T-cell (primary cell): ENCODE measurements at regions of chr2 and their contacts with region 1.

Region 1: GRCh38 chr2:191051825-191052778 is 38.1 kb upstream of the STAT1 start:
- DNase-seq: peak in 6 of 35 experiments; percentile 5 to 77 (median 23)
- ATAC-seq: peak; percentile 58 to 74 (median 68)
- H3K4me3 ChIP-seq: no peak overlapping the region
- H3K4me3 Mint-ChIP-seq: no peak overlapping the region
- H3K27ac ChIP-seq: peak overlapping the region; percentile 14
- H3K27ac Mint-ChIP-seq: no peak overlapping the region
- H3K4me1 ChIP-seq: peaks cover 8 to 15% of the 10 kb centered on the region in 2 experiments
- H3K4me1 Mint-ChIP-seq: peaks cover 23 to 26% (median 24%) of the 10 kb centered on the region in 3 donors
- H3K27me3 ChIP-seq: no peaks in the 10 kb centered on the region
- H3K27me3 Mint-ChIP-seq: no peaks in the 10 kb centered on the region

Region 2: DNA sequence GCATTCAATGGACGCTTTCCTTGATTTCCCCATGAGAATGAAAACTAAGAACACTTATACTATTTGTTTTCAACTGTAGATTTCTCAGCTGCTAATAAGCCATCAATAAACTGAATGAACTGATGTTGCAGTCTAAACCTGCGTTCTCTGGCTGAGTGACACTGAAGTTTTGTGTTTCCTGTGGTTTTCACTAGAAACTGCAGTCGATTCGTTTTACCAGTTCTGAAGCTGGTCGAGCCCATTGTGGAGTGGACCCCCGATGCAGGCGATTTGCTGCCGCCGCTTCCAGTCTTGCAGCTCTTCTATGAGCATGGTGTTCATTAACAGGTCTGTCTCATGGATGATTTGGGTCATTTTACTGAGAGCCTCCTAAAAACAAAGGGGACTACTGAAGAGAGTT is 12.5 kb after region 1 on chr2:
- CTCF ChIA-PET with region 1: interaction called, 21 to 63 read pairs
- POLR2A ChIA-PET with region 1: interaction called, 3 to 4 read pairs
- DNase-seq: peak in 20 of 35 experiments; percentile 1 to 54 (median 14)
- ATAC-seq: peak in 3 of 4 experiments; percentile 45 to 61 (median 56)
- H3K4me3 ChIP-seq: peak overlapping the region; percentile 10 to 23
- H3K4me3 Mint-ChIP-seq: peak overlapping the region; percentile 73 to 87 (median 80)
- H3K27ac ChIP-seq: peak overlapping the region; percentile 55
- H3K27ac Mint-ChIP-seq: peak overlapping the region; percentile 98
- H3K4me1 ChIP-seq: peaks cover 34 to 55% of the 10 kb centered on the region in 2 experiments
- H3K4me1 Mint-ChIP-seq: peaks cover 76 to 85% (median 82%) of the 10 kb centered on the region in 3 donors
- H3K27me3 ChIP-seq: no peaks in the 10 kb centered on the region
- H3K27me3 Mint-ChIP-seq: no peaks in the 10 kb centered on the region

Region 3: GRCh38 chr2:191078165-191078867 is 26.2 kb after region 1 on chr2:
- CTCF ChIA-PET with region 1: interaction called in 1 of 2 experiments, 11 read pairs
- POLR2A ChIA-PET with region 1: interaction called in 1 of 2 experiments, 5 read pairs
- DNase-seq: no peak
- ATAC-seq: no peak
- H3K4me3 ChIP-seq: no peak overlapping the region
- H3K4me3 Mint-ChIP-seq: peak overlapping the region; percentile 3 to 57 (median 29)
- H3K27ac ChIP-seq: peak overlapping the region; percentile 42
- H3K27ac Mint-ChIP-seq: peak overlapping the region; percentile 92
- H3K4me1 ChIP-seq: no peaks in the 10 kb centered on the region
- H3K4me1 Mint-ChIP-seq: peaks cover 29 to 54% (median 37%) of the 10 kb centered on the region in 3 donors
- H3K27me3 ChIP-seq: no peaks in the 10 kb centered on the region
- H3K27me3 Mint-ChIP-seq: no peaks in the 10 kb centered on the region

Region 4: GRCh38 chr2:191150600-191151330 is 98.7 kb after region 1 on chr2 and contains the start of gene STAT4:
- CTCF ChIA-PET with region 1: interaction called, 218 to 322 read pairs
- POLR2A ChIA-PET with region 1: interaction called, 5 to 16 read pairs
- DNase-seq: peak; percentile 43 to 95 (median 85)
- ATAC-seq: peak; percentile 84 to 88 (median 84)
- H3K4me3 ChIP-seq: peak within 1 kb of the TSS; percentile 91 to 98
- H3K4me3 Mint-ChIP-seq: peak within 1 kb of the TSS; percentile 90 to 93 (median 90)
- H3K27ac ChIP-seq: peak within 1 kb of the TSS; percentile 99
- H3K27ac Mint-ChIP-seq: peak within 1 kb of the TSS; percentile 95 to 96
- H3K4me1 ChIP-seq: peaks cover 27 to 31% of the 10 kb centered on the region in 2 experiments
- H3K4me1 Mint-ChIP-seq: peaks cover 63 to 67% (median 64%) of the 10 kb centered on the region in 3 donors
- H3K27me3 ChIP-seq: no peaks in the 10 kb centered on the region
- H3K27me3 Mint-ChIP-seq: no peaks in the 10 kb centered on the region
- total RNA-seq, gene STAT4: 79.5 to 141 (median 91.7) TPM

Region 5: GRCh38 chr2:191204433-191204832 is 152.3 kb after region 1 on chr2:
- CTCF ChIA-PET with region 1: interaction called in 1 of 2 experiments, 3 read pairs
- POLR2A ChIA-PET with region 1: interaction called in 1 of 2 experiments, 11 read pairs
- DNase-seq: peak in 2 of 35 experiments; percentile 7 to 60
- ATAC-seq: peak in 1 of 4 experiments; percentile 65
- H3K4me3 ChIP-seq: peak overlapping the region in 1 of 2 donors; percentile 23
- H3K4me3 Mint-ChIP-seq: peak overlapping the region; percentile 60 to 77 (median 74)
- H3K27ac ChIP-seq: peak overlapping the region; percentile 80
- H3K27ac Mint-ChIP-seq: peak overlapping the region; percentile 93 to 94
- H3K4me1 ChIP-seq: peaks cover 9 to 35% of the 10 kb centered on the region in 2 experiments
- H3K4me1 Mint-ChIP-seq: peaks cover 47 to 52% (median 51%) of the 10 kb centered on the region in 3 donors
- H3K27me3 ChIP-seq: no peaks in the 10 kb centered on the region
- H3K27me3 Mint-ChIP-seq: no peaks in the 10 kb centered on the region